ENCODE measurements at regions of chr3 and their contacts with region 1.

Region 1: DNA sequence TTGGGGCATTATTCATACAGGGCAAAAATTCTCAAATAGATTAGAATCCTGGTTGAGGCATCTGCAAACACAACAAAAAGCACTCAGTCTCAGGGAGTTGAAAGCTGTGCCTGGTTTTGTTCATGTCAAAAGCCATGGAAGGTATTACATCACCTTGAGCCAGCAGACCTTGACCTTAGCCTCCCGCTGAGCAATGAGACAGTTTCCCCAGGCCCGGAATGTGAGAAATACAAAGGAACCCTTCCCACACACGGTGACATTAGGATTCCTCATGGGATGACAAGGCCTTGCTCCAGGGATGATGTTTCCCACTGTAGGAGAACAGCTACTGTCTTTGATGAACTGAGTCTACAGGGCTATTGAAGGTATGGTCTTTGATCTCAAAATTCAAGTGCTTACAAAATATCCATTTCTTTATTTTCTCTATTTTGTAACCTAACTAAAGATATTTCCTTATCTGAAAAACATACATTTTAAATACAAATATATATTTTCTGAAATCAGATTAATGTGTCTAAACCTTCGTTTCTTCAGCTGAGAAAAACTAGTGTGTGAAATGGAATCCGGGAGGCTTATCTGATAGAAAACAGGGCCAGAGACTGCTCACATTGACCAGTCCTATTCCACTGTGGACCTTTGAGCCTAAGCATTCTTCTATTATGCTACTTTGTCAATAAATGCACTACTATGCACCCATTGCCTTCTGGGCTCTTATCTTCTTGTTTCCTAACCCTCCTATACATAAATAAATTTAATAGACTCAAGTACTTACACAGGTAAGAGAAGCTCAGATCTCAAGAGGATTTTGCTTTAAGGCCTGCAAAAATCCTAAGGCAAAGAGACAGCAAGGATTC is 298.2 kb downstream of the KBTBD8 start:
- DNase-seq: peak; percentile 99
- ATAC-seq: peak; percentile 87
- H3K4me3 ChIP-seq: peak overlapping the region in 2 of 3 experiments; percentile 24 to 34; a peak in 3 of 6 replicates
- H3K27ac ChIP-seq: peak overlapping the region; percentile 93
- H3K4me1 ChIP-seq: peaks cover 69% of the 10 kb centered on the region
- H3K27me3 ChIP-seq: no peaks in the 10 kb centered on the region
- CTCF ChIP-seq: no peak
- EP300 ChIP-seq: peak; percentile 43 to 97; a peak in 3 of 4 replicates
- POLR2A ChIP-seq: no peak
- RAD21 ChIP-seq: no peak

Region 2: GRCh38 chr3:67016522-67017080 is 279.7 kb before region 1 on chr3:
- CTCF ChIA-PET with region 1: no interaction called
- POLR2A ChIA-PET with region 1: no interaction called
- in situ Hi-C with region 1: no loop called
- intact Hi-C with region 1: no loop called
- DNase-seq: no peak
- ATAC-seq: no peak
- H3K4me3 ChIP-seq: no peak overlapping the region
- H3K27ac ChIP-seq: no peak overlapping the region
- H3K4me1 ChIP-seq: peaks cover 21% of the 10 kb centered on the region
- H3K27me3 ChIP-seq: peaks cover 1 to 11% of the 10 kb centered on the region in 2 experiments; a peak in 4 of 5 replicates
- CTCF ChIP-seq: no peak
- EP300 ChIP-seq: no peak
- POLR2A ChIP-seq: no peak
- RAD21 ChIP-seq: no peak

Region 3: DNA sequence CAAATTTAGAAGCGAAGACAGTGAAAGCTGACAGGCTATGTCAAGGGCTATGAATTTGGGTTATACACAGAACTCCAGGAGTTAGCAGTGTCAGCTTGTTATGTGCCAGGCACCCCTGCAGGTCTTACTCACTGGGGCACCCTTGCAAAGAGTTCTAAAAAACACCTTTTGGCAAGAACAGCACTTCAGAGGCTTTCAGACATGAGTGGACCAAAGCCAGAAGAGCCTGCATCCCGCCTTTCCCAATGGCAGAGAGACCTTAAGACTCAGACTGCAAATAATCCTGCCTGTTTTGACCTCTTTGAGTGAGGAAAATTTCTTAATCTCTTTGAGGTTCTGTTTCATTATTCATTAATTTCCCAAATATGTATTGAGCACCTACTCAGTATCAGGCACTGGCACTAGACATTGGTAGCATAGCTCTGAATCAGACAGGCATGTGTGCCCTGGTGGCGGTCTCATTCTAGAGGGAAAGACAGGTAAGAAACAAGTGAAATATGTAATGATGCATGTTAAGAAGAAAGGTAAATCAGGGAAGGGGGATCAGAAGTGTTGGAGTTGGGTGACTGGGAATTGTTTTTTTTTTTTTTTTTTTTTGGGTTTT is 18.1 kb before region 1 on chr3:
- CTCF ChIA-PET with region 1: no interaction called
- POLR2A ChIA-PET with region 1: no interaction called
- in situ Hi-C with region 1: no loop called
- intact Hi-C with region 1: no loop called
- DNase-seq: no peak
- ATAC-seq: no peak
- H3K4me3 ChIP-seq: no peak overlapping the region
- H3K27ac ChIP-seq: no peak overlapping the region
- H3K4me1 ChIP-seq: no peaks in the 10 kb centered on the region
- H3K27me3 ChIP-seq: peaks cover 0 to 9% of the 10 kb centered on the region in 2 experiments; a peak in 1 of 5 replicates
- CTCF ChIP-seq: no peak
- EP300 ChIP-seq: no peak
- POLR2A ChIP-seq: no peak
- RAD21 ChIP-seq: no peak

Region 4: DNA sequence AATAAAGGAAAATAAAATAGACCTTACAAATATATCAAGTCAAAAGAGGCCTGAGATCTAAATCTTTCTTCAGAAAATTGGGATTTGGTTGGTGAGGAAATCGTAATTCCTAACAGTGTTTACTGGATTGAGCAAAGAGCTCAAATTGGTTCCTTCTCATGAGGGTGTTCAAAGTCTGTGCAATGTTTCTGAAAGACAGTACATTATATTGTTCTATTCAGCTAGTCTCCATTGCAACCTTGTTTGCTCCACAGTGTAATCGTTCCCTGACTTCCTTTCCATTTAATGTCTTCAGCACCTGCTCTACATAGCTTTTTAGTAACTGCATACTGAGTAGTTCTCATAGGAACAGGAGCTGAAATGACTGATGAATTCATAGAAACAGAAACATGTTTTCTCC is 31.3 kb after region 1 on chr3:
- CTCF ChIA-PET with region 1: no interaction called
- POLR2A ChIA-PET with region 1: no interaction called
- in situ Hi-C with region 1: no loop called
- intact Hi-C with region 1: loop called (anchors 2 kb)
- DNase-seq: peak; percentile 81
- ATAC-seq: peak; percentile 93
- H3K4me3 ChIP-seq: peak overlapping the region in 1 of 3 experiments; percentile 5; a peak in 1 of 6 replicates
- H3K27ac ChIP-seq: peak overlapping the region; percentile 28
- H3K4me1 ChIP-seq: peaks cover 35% of the 10 kb centered on the region
- H3K27me3 ChIP-seq: no peaks in the 10 kb centered on the region
- CTCF ChIP-seq: no peak
- EP300 ChIP-seq: peak in 1 of 2 experiments; percentile 30; a peak in 1 of 4 replicates
- POLR2A ChIP-seq: no peak
- RAD21 ChIP-seq: no peak

Region 5: DNA sequence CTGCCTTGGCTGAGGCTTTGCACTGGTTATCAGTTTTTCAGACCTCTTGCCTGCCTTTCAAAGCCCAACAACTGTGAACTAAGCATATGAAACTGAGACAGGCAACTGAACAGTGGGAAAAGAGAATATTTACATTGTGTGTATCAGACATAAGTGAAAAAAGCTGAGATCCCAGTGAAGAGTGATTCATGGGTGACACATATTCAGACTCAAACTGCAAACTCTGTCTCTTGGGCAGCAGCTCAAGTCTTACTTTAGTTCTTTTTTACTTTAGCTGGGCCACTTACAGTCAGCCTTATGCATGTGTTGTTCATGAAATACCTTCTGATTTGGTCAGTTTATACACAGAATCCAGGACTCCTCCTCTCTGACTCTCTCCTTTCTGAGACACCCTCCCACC is 339.0 kb after region 1 on chr3:
- CTCF ChIA-PET with region 1: no interaction called
- POLR2A ChIA-PET with region 1: no interaction called
- in situ Hi-C with region 1: no loop called
- intact Hi-C with region 1: no loop called
- DNase-seq: no peak
- ATAC-seq: no peak
- H3K4me3 ChIP-seq: no peak overlapping the region
- H3K27ac ChIP-seq: no peak overlapping the region
- H3K4me1 ChIP-seq: no peaks in the 10 kb centered on the region
- H3K27me3 ChIP-seq: no peaks in the 10 kb centered on the region
- CTCF ChIP-seq: no peak
- EP300 ChIP-seq: no peak
- POLR2A ChIP-seq: no peak
- RAD21 ChIP-seq: no peak

Region 6: DNA sequence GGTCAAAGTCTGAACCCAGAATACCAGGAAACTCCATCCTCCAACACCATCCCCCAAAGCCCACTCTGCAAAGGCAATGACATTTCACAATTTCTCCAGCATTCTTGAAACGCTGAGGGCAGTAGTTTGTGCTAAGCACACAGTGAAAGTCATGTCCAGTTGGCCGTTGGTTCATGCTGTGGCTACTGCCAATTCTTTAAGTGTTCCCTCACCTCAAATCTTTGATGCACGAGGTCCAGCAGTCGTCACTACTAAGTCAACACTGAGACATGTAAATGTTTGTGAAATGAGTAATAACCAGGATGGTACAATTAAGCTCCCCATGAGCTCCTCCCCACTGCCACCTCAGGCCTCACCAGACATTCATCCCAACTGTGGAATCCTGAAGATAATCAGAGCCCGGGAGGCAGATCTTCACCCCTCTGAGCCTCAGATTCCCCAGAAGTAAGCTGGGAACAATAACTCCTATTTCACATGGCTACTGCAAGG is 351.2 kb after region 1 on chr3:
- CTCF ChIA-PET with region 1: no interaction called
- POLR2A ChIA-PET with region 1: no interaction called
- in situ Hi-C with region 1: no loop called
- intact Hi-C with region 1: loop called (anchors 5 kb)
- DNase-seq: peak; percentile 98
- ATAC-seq: peak; percentile 89
- H3K4me3 ChIP-seq: peak overlapping the region in 1 of 3 experiments; percentile 18; a peak in 1 of 6 replicates
- H3K27ac ChIP-seq: peak overlapping the region; percentile 86
- H3K4me1 ChIP-seq: peaks cover 79% of the 10 kb centered on the region
- H3K27me3 ChIP-seq: no peaks in the 10 kb centered on the region
- CTCF ChIP-seq: no peak
- EP300 ChIP-seq: peak; percentile 87 to 97
- POLR2A ChIP-seq: no peak
- RAD21 ChIP-seq: peak; percentile 30; the same call in 1 of the 2 replicates